Activated B cell treated with CpG ODN at 0.5 μM for 24 hours (primary cell): ENCODE measurements at regions of chr12 and their contacts with region 1.

Region 1: DNA sequence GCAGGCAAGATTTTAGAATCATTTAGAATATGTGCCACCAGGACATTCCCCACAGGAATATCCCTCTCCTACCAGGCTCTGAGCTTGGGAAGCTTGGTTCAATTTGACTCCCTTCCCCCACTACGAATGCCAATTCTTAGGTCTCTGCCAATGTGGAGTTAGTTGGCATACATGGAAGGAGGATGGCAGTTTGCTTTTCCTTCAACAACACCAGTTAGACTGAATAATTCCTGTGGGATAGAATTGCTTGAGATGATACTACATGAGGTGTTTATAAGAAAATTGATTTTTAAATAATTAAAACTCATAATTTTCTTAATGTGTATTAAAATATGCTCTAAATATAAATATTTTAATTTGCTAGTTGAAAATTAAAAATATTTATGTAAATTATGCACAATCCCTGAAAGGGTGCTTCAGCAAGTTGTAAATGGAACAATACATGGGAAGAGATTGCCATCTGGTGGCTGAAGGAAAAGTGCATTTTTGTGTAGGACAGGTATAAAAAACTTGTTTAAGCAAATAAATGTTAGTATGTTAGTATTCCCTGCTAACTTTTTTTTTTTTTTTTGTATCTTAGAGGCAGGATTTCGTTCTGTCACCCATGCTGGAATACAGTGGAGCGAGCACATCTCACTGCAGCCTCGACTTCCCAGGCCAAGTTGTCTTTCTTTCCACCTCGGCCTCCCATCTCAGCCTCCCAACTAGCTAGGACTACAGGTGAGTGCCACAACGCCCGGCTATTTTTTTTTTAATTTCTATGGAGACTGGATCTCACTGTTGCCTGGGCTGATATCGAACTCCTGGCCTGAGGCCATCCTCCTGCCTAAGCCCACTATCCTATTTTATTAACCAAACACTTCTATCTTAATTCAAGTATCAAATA is 25.8 kb upstream of the STRAP start:
- DNase-seq: no peak
- ATAC-seq: peak; percentile 45
- H3K4me3 Mint-ChIP-seq: no peak overlapping the region
- H3K27ac Mint-ChIP-seq: no peak overlapping the region
- H3K4me1 Mint-ChIP-seq: no peaks in the 10 kb centered on the region
- H3K27me3 Mint-ChIP-seq: no peaks in the 10 kb centered on the region
- CTCF ChIP-seq: peak; percentile 95

Region 2: DNA sequence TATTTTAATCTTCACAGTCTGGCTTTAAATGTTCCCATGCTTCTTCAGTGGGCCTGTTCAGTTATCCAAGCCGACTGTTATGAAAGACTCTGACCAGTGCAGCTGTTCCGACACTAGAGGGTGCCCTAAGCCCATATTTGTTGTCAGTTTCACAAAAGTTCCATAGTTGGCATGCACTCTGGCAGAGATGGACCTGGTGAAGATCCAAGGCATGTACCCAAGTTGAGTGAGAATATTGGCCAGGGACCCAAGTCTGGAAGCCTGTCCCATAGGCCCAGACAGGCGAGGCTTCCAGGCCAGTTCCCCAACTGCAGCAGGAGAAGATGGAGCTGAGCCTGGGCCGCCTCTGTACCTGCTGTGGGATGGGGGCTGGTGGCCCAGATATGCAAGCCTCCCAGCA is 1132.6 kb before region 1 on chr12:
- CTCF ChIA-PET with region 1: no interaction called
- POLR2A ChIA-PET with region 1: no interaction called
- intact Hi-C with region 1: loop called (anchors 5 kb)
- DNase-seq: no peak
- ATAC-seq: peak; percentile 76
- H3K4me3 Mint-ChIP-seq: no peak overlapping the region
- H3K27ac Mint-ChIP-seq: no peak overlapping the region
- H3K4me1 Mint-ChIP-seq: no peaks in the 10 kb centered on the region
- H3K27me3 Mint-ChIP-seq: peaks cover 11% of the 10 kb centered on the region
- CTCF ChIP-seq: peak; percentile 25

Region 3: DNA sequence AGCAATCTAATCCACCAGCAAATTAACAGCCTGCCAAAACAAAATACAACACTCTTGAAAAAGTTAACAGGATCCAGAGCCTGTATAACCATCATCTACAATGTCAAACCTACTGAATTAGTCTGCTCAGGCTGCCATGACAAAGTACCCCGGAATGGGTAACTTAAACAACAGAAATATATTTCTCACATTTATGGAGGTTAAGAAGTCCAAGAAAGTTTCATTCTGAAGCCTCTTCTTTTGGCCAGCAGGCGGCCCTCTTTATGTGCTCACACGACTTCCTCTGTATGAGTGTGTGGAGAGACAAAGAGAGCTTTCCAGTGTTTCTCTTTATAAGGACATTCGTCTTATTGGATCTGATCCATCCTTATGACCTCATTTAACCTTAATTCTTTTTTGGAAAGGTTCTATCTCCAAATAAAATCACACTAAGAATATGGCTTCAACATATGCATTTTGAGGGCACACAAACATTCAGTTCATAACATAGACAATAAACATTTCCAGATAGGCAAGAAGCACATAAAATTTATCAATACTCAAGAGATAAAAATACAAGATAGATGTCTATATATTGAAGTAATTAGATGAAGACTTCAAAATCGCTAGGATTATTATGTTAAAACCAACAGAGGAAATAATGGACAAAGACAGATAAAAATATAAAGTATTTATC is 629.2 kb before region 1 on chr12:
- CTCF ChIA-PET with region 1: interaction called, 3 read pairs
- POLR2A ChIA-PET with region 1: no interaction called
- intact Hi-C with region 1: loop called (anchors 1 kb)
- DNase-seq: no peak
- ATAC-seq: no peak
- H3K4me3 Mint-ChIP-seq: no peak overlapping the region
- H3K27ac Mint-ChIP-seq: no peak overlapping the region
- H3K4me1 Mint-ChIP-seq: no peaks in the 10 kb centered on the region
- H3K27me3 Mint-ChIP-seq: peaks cover 29% of the 10 kb centered on the region
- CTCF ChIP-seq: no peak

Region 4: DNA sequence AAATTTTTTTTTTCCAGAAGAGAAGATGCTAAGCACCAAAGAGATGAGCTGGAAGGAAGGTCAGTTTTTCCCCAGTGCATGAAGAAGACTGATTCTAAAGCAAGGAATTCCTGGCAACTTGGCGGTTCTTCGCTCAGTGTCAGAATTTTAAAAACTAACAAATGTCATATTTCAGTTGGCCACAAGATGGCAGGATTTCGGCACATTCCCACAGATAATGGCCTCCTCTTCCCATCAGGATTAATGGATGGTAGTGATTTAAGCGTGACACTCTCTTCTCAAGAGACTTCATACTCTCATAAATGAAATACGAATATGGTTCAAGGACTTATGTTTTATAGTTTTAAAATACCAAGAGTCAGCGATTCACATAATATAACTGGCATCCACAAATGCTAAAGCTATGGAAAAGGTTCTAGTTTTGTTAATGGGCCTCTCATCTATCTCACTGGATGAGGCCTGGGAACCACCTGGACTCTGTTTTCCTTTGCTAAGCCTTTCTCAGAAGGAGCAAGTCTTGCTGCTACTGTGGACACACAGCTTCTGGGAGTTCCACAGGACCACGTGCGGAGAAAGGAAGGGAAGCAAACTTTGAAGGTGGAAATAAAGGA is 580.1 kb before region 1 on chr12:
- CTCF ChIA-PET with region 1: interaction called, 4 read pairs
- POLR2A ChIA-PET with region 1: no interaction called
- intact Hi-C with region 1: loop called (anchors 1 kb)
- DNase-seq: no peak
- ATAC-seq: no peak
- H3K4me3 Mint-ChIP-seq: no peak overlapping the region
- H3K27ac Mint-ChIP-seq: no peak overlapping the region
- H3K4me1 Mint-ChIP-seq: no peaks in the 10 kb centered on the region
- H3K27me3 Mint-ChIP-seq: peaks cover 8% of the 10 kb centered on the region
- CTCF ChIP-seq: no peak

Region 5: DNA sequence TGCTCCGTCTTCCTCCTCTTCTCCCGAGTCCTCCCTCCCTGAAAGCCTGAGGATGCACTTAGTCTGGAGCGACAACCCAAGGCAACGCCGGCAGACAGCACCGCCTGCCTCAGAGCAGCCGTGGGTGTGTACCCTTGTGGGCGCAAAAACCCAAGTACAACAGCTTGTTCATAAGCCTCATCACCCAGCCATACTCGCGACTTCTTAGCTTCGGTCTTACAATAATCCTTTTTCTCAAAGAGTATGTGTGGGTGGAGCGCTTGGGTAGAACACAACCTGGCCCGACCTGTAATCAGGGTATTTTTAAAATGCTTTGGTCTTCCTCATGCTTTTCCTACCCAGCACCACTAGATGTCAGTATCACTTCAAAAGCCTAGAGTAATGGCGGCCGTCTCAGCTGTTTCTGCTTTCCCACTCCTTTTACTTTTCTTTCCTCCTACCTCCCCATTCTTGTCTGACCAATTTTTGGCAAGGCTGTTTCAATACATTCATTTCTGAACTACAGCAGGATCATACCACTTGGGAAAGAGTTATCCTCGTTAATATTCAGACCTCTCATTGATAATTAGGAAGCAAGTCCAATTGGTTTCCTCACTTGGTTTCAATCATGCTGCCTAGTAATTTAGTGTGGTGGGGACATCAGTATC is 266.0 kb before region 1 on chr12:
- CTCF ChIA-PET with region 1: interaction called, 46 read pairs
- POLR2A ChIA-PET with region 1: no interaction called
- intact Hi-C with region 1: loop called (anchors 1 kb)
- DNase-seq: peak; percentile 22
- ATAC-seq: peak; percentile 98
- H3K4me3 Mint-ChIP-seq: peak overlapping the region; percentile 72
- H3K27ac Mint-ChIP-seq: peak overlapping the region; percentile 14
- H3K4me1 Mint-ChIP-seq: peaks cover 9% of the 10 kb centered on the region
- H3K27me3 Mint-ChIP-seq: no peaks in the 10 kb centered on the region
- CTCF ChIP-seq: peak; percentile 55

Region 6: DNA sequence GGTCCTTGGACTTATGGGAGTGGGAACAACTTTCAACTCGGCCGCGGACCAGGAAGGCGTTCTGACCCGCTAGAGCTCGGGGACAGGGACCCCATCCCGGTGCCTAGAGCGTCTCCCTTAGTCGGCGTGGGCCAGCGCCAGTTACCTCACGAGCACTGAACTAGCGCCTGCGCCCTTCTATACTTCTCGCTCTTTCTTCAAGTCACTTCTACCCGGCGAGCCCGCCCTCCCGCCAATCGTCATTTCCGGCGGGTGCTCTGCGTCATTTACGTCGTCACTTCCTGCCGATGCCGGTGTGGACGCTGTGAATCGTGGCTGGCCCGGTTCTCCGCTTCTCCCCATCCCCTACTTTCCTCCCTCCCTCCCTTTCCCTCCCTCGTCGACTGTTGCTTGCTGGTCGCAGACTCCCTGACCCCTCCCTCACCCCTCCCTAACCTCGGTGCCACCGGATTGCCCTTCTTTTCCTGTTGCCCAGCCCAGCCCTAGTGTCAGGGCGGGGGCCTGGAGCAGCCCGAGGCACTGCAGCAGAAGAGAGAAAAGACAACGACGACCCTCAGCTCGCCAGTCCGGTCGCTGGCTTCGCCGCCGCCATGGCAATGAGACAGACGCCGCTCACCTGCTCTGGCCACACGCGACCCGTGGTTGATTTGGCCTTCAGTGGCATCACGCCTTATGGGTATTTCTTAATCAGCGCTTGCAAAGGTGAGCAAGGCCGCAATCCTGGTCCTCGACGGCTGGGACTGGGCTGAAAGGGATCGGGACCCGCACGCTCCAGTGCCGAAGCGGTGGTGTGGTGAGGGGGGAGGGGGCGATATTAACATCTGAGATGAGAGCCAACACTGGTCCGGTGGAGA is 26.0 kb after region 1 on chr12 and contains the start of gene STRAP:
- CTCF ChIA-PET with region 1: no interaction called
- POLR2A ChIA-PET with region 1: no interaction called
- intact Hi-C with region 1: loop called (anchors 2 kb)
- DNase-seq: peak; percentile 95
- ATAC-seq: peak; percentile 94
- H3K4me3 Mint-ChIP-seq: peak within 1 kb of the TSS; percentile 99
- H3K27ac Mint-ChIP-seq: peak within 1 kb of the TSS; percentile 99
- H3K4me1 Mint-ChIP-seq: peaks cover 53% of the 10 kb centered on the region
- H3K27me3 Mint-ChIP-seq: no peaks in the 10 kb centered on the region
- CTCF ChIP-seq: no peak
- total RNA-seq, gene STRAP: 78.1 and 82.3 TPM in 2 replicates